ENCODE measurements at regions of chr12 and their contacts with region 1.

Region 1: DNA sequence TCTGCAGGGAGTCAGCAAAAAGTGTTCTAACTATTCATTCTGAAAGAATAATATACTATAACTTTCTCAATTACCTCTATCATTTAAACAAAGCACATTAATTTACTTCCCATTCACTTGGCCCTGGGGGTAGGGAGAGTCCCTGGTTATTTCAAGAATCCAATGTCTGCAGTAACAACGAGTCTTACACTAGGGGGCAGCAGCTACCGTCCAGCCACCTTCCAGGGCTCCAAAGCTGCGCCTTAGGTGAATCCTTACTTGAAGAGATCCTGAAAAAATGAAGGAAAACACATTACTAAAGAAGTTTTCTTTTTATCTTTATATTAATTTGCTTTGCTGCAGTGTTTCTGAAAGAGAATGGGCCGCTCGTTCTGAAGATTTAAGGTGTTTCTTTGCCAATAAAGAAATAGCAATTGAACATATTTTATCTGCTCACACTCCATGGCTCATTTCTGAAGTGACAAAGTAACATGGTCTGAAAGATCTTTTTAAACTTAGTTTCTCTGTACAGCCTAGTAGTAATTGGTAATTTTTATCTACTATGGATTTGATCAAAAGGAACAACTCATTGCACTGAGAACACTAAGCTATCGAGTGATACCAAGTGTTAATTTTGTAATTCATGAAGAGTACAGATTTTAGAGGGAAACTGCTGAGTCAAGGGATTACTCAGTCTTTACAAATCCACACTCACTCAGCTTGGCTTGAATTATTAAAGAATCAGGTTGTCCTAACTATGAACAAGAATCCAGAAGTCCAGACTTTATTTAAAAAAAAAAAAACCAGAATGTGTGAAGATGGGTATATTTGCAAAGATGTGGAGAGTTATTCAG is 27.6 kb downstream of the BHLHE41 start:
- DNase-seq: peak; percentile 62
- H3K4me3 Mint-ChIP-seq: no peak overlapping the region
- H3K27ac Mint-ChIP-seq: no peak overlapping the region
- H3K4me1 Mint-ChIP-seq: no peaks in the 10 kb centered on the region
- H3K27me3 Mint-ChIP-seq: peaks cover 14% of the 10 kb centered on the region

Region 2: GRCh38 chr12:25997201-25997963 is 99.9 kb before region 1 on chr12:
- CTCF ChIA-PET with region 1: no interaction called
- POLR2A ChIA-PET with region 1: no interaction called
- intact Hi-C with region 1: no loop called
- DNase-seq: no peak
- H3K4me3 Mint-ChIP-seq: no peak overlapping the region
- H3K27ac Mint-ChIP-seq: no peak overlapping the region
- H3K4me1 Mint-ChIP-seq: no peaks in the 10 kb centered on the region
- H3K27me3 Mint-ChIP-seq: peaks cover 3% of the 10 kb centered on the region

Region 3: DNA sequence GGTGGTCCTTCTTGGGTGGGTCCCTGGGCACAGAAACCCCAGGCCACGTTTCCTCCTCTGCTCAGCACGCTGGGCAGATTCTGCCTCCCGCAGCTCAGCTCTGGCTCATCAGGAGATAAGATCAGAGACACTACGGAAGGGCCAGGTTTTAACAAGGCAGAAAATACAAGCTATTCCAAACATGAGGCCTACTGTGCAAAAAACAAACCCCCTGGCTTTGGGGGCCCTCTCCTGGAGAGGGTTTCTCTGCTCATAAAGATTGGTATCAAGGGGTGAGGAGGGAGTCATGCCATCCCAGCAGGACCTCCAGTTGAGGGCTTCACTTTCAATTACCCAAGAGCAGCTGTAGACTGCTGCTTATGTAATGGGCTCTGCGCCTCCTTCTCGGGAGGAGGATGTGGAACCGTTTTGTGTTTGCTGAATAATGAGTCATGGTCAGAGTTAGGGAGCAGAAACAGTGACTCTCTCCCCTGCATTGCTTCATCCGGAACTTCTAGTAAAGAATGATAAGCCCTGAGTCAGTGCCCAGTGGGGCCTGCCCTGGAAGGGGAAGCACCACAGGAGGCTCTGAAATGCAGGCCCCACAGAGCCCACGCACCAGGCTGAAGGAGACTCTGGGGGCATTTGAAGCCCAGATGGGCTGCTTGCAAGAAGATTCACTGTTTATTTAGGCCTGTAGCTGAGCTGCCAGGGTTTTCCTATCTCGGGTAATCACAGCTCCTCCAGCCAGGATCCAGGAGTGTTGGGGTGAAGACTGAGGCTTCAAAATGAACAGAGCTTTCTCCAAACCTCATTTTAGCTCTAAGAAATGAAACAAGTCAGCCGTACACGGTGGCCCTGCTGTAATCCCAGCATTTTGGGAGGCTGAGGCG is 177.4 kb after region 1 on chr12:
- CTCF ChIA-PET with region 1: no interaction called
- POLR2A ChIA-PET with region 1: no interaction called
- intact Hi-C with region 1: loop called (anchors 1 kb)
- DNase-seq: peak; percentile 77
- H3K4me3 Mint-ChIP-seq: no peak overlapping the region
- H3K27ac Mint-ChIP-seq: no peak overlapping the region
- H3K4me1 Mint-ChIP-seq: peaks cover 16% of the 10 kb centered on the region
- H3K27me3 Mint-ChIP-seq: peaks cover 3% of the 10 kb centered on the region

Region 4: DNA sequence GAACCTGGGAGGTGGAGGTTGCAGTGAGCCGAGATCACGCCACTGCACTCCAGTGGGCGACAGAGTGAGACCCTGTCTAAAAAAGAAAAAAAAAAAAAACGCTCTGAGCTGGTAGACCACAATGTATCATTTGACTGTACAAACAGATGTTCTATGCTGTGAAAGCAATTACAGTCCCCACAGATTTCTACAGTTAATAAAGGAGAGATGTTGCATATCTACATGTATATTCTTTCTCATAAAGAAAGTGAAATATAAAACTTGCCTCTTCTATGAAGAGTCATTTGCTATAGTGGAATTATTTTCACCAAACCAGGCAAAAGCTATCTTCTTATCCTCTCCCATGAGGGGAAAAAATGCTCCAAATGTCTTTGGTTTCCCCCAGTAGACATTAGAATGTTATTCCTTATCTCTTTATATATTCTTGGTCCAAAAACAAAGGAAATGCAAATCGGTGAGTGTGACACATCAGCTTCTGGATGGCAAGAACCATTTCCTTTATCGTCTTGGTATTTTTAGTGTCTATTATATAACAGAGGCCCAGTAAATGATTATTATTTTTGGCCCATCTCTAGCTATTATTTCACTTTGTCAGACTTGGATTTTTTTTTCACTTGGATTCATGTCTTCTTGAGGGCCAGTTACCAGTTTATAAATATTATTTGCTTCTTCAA is 328.5 kb after region 1 on chr12:
- CTCF ChIA-PET with region 1: no interaction called
- POLR2A ChIA-PET with region 1: no interaction called
- intact Hi-C with region 1: loop called (anchors 10 kb)
- DNase-seq: no peak
- H3K4me3 Mint-ChIP-seq: no peak overlapping the region
- H3K27ac Mint-ChIP-seq: no peak overlapping the region
- H3K4me1 Mint-ChIP-seq: no peaks in the 10 kb centered on the region
- H3K27me3 Mint-ChIP-seq: no peaks in the 10 kb centered on the region

Region 5: DNA sequence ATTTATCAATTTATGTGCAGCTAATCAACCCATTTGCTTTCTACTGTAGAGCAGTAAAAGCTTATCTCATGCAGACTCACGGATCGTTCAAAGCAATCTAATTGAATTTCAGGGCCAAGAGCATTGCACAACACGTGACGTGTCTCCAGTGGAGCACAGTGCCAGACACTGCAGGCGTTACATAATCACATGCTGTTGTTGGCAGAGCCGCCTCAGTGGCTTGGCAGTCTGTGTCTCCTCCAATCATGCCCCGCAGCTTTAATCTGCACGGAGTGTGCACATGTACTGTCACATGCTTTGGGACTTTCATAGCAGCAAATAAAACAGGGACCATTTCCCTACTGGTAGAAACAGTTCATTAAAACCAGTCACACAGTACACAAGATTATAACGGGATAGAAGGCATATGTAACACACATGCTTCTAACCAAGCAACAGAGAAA is 426.5 kb after region 1 on chr12:
- CTCF ChIA-PET with region 1: interaction called, 8 read pairs
- POLR2A ChIA-PET with region 1: no interaction called
- intact Hi-C with region 1: loop called (anchors 2 kb)
- DNase-seq: no peak
- H3K4me3 Mint-ChIP-seq: no peak overlapping the region
- H3K27ac Mint-ChIP-seq: no peak overlapping the region
- H3K4me1 Mint-ChIP-seq: peaks cover 7% of the 10 kb centered on the region
- H3K27me3 Mint-ChIP-seq: no peaks in the 10 kb centered on the region

Region 6: GRCh38 chr12:26614020-26614616 is 516.9 kb after region 1 on chr12:
- CTCF ChIA-PET with region 1: interaction called, 6 read pairs
- POLR2A ChIA-PET with region 1: no interaction called
- intact Hi-C with region 1: loop called (anchors 1 kb)
- DNase-seq: peak; percentile 40
- H3K4me3 Mint-ChIP-seq: no peak overlapping the region
- H3K27ac Mint-ChIP-seq: no peak overlapping the region
- H3K4me1 Mint-ChIP-seq: no peaks in the 10 kb centered on the region
- H3K27me3 Mint-ChIP-seq: no peaks in the 10 kb centered on the region

Region 7: GRCh38 chr12:26651566-26652188 is 554.4 kb after region 1 on chr12:
- CTCF ChIA-PET with region 1: interaction called, 11 read pairs
- POLR2A ChIA-PET with region 1: no interaction called
- intact Hi-C with region 1: loop called (anchors 1 kb)
- DNase-seq: peak; percentile 50
- H3K4me3 Mint-ChIP-seq: no peak overlapping the region
- H3K27ac Mint-ChIP-seq: no peak overlapping the region
- H3K4me1 Mint-ChIP-seq: no peaks in the 10 kb centered on the region
- H3K27me3 Mint-ChIP-seq: no peaks in the 10 kb centered on the region

Region 8: GRCh38 chr12:26701604-26702215 is 604.4 kb after region 1 on chr12:
- CTCF ChIA-PET with region 1: interaction called, 7 read pairs
- POLR2A ChIA-PET with region 1: no interaction called
- intact Hi-C with region 1: loop called (anchors 1 kb)
- DNase-seq: no peak
- H3K4me3 Mint-ChIP-seq: no peak overlapping the region
- H3K27ac Mint-ChIP-seq: no peak overlapping the region
- H3K4me1 Mint-ChIP-seq: no peaks in the 10 kb centered on the region
- H3K27me3 Mint-ChIP-seq: no peaks in the 10 kb centered on the region

Measured in activated CD4-positive, alpha-beta memory T cell treated with anti-CD3 and anti-CD28 coated beads for 36 hours (primary cell).